AG04450 (cell line): ENCODE measurements at regions of chr9 and their contacts with region 1.

Region 1: GRCh38 chr9:3240656-3241268 is 285.0 kb downstream of the RFX3 start:
- DNase-seq: no peak
- H3K4me3 ChIP-seq: no peak overlapping the region
- H3K27ac ChIP-seq: no peak overlapping the region
- H3K27me3 ChIP-seq: no peaks in the 10 kb centered on the region
- CTCF ChIP-seq: peak; percentile 88

Region 2: DNA sequence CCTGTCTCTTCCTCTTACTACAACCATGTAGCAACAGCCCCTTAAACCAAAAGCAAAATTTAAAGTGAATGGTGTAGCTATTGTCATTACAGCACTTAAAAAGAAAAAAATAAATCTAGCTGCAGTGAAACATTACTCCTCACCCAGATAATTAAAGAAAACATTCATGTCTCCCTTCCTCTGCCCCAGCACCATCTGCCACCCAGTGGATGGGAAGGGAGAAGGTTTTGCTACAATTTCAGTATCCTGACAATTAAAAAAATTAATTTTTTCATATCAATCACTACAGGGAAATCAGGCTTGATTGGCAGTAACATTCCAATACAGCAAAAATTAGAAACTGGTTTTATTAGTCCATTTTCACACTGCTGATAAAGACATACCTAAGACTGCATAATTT is 249.5 kb before region 1 on chr9:
- CTCF ChIA-PET with region 1: no interaction called
- POLR2A ChIA-PET with region 1: no interaction called
- DNase-seq: no peak
- H3K4me3 ChIP-seq: no peak overlapping the region
- H3K27ac ChIP-seq: no peak overlapping the region
- H3K27me3 ChIP-seq: no peaks in the 10 kb centered on the region
- CTCF ChIP-seq: 0 out of 2 replicates have a peak, but pooled peaks have one; percentile 12

Region 3: DNA sequence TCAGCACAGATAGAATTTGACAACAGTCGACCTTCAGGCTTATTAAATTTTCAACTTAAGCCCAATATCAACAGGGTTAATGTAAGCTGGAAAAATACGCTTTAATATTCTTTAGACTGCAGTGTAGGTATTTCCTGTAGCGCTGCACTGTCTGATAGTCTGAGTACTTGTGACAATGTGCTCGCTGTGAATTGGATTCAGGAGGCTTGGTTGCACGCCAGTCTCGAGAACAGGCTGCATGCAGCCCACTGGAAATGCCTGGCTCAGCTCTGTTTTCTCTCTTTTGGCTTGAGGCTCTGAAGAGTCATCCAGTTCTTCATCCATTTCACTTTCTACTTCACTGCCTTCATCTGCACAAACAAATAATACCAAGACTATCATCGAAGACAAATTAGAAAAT is 15.8 kb before region 1 on chr9:
- CTCF ChIA-PET with region 1: interaction called, 14 read pairs
- POLR2A ChIA-PET with region 1: no interaction called
- DNase-seq: no peak
- H3K4me3 ChIP-seq: no peak overlapping the region
- H3K27ac ChIP-seq: no peak overlapping the region
- H3K27me3 ChIP-seq: no peaks in the 10 kb centered on the region
- CTCF ChIP-seq: no peak

Region 4: DNA sequence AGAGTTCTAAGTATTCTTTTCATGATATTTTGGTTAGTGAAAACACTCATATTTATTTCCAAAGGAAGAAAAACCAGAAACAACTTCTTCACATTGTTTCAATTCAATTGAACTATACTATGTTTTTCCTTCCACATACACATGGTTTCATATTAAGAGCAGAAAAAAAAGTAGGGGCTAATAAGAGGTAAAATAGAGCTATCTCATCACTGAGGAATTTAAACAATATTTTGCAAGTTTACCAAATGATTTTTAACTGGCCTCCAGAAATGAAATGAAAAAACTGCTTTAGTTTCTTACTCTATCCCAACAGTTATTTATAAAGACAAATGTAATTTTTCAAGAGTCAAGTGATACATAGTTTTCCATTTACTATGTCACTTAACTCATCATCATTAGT is 51.5 kb after region 1 on chr9:
- CTCF ChIA-PET with region 1: interaction called, 11 read pairs
- POLR2A ChIA-PET with region 1: no interaction called
- DNase-seq: peak; percentile 1
- H3K4me3 ChIP-seq: no peak overlapping the region
- H3K27ac ChIP-seq: no peak overlapping the region
- H3K27me3 ChIP-seq: no peaks in the 10 kb centered on the region
- CTCF ChIP-seq: no peak

Region 5: DNA sequence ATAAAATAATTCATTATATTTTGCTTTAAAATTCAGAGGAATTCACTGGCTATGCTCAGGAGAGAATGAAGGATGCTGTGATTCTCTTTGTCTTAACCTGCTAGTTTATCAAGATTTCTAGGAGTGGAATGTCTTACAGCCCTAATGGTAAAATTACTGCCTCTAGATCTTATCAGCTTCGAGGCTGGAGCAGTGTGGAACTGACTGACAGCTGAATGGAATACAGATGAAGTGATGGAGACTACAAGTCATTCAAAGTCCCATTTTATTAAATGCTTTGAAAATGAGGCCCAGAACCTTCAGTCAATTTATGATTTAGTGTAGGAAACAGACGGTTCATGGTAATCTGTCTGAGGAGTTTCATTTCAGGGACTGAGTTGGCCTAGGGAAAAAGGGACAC is 83.0 kb after region 1 on chr9:
- CTCF ChIA-PET with region 1: no interaction called
- POLR2A ChIA-PET with region 1: no interaction called
- DNase-seq: no peak
- H3K4me3 ChIP-seq: no peak overlapping the region
- H3K27ac ChIP-seq: no peak overlapping the region
- H3K27me3 ChIP-seq: no peaks in the 10 kb centered on the region
- CTCF ChIP-seq: no peak